A549 (cell line): ENCODE measurements at regions of chr20 and their contacts with region 1.

Region 1: DNA sequence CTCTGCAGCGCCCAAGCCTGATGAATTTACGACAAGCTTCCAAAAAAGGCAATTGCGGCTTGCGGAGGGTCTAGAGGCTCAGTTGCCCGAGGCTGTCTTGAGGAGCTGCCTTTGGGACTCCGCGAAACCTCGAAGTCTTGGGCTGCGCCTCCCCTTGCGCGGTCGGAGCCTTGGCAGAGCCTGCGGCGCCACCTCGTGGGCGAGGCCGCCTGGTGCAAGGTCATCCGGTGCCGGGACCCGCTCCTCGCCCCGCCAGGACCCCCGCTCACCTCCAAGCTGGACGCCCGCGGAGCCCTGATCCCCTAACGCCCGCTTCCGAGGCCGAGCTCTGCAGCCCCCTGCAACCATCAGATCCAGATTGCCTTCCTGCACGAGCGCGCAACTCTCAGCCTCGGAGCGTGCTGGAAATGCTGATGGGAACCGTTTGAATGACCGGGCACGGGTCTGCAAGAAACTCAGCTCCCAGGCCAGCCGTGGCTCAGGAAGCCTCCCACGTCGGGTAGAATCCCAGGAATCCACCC is 14.9 kb upstream of the FAM210B start:
- DNase-seq: peak; percentile 55 to 59
- ATAC-seq: peak; percentile 87 to 98; a peak in 5 of 6 replicates
- H3K4me3 ChIP-seq: peak overlapping the region; percentile 11; the same call in 1 of the 3 replicates
- H3K27ac ChIP-seq: no peak overlapping the region
- H3K4me1 ChIP-seq: 0 out of 3 replicates have a peak, but pooled peaks cover 6% of the 10 kb centered on the region
- CTCF ChIP-seq: peak; percentile 64
- EP300 ChIP-seq: no peak
- POLR2A ChIP-seq: no peak
- RAD21 ChIP-seq: peak; percentile 75 to 82

Region 2: GRCh38 chr20:54680872-54681619 is 1662.9 kb before region 1 on chr20:
- CTCF ChIA-PET with region 1: interaction called, 16 read pairs
- POLR2A ChIA-PET with region 1: no interaction called
- DNase-seq: peak in 1 of 2 experiments; percentile 51
- ATAC-seq: peak in 1 of 2 experiments; percentile 69; a peak in 3 of 6 replicates
- H3K4me3 ChIP-seq: no peak overlapping the region
- H3K27ac ChIP-seq: no peak overlapping the region
- H3K4me1 ChIP-seq: no peaks in the 10 kb centered on the region
- CTCF ChIP-seq: peak; percentile 51
- EP300 ChIP-seq: no peak
- POLR2A ChIP-seq: no peak
- RAD21 ChIP-seq: peak; percentile 70

Region 3: GRCh38 chr20:56247948-56248782 is 95.8 kb before region 1 on chr20 and contains the start of gene MC3R:
- CTCF ChIA-PET with region 1: interaction called, 38 read pairs
- POLR2A ChIA-PET with region 1: no interaction called
- DNase-seq: peak; percentile 26 to 63
- ATAC-seq: peak; percentile 90 to 96
- H3K4me3 ChIP-seq: no peak within 1 kb of the TSS
- H3K27ac ChIP-seq: no peak within 1 kb of the TSS
- H3K4me1 ChIP-seq: no peaks in the 10 kb centered on the region
- CTCF ChIP-seq: peak; percentile 62
- EP300 ChIP-seq: no peak
- POLR2A ChIP-seq: no peak
- RAD21 ChIP-seq: peak; percentile 56 to 62
- polyA plus RNA-seq, gene MC3R: not detected in 2 replicates

Region 4: DNA sequence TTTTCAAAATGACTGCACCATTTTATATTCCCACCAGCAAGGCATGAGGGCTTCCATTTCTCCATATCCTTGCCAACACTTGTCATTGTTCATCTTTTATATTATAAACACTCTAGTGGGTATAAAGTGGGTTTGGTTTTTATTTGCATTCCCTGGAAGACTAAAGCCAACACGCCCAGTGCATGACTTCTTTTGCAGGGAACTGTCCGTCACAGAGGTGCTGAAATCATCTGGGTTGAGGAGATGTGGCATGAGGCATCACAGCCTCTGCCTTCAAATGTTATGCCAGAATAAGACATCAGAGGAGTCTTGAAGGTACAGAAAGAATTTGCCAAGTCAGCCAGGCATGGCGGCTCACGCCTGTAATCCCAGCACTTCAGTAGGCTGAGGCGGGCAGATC is 15.1 kb before region 1 on chr20:
- CTCF ChIA-PET with region 1: interaction called, 16 read pairs
- POLR2A ChIA-PET with region 1: no interaction called
- DNase-seq: peak in 1 of 2 experiments; percentile 6
- ATAC-seq: no peak
- H3K4me3 ChIP-seq: no peak overlapping the region
- H3K27ac ChIP-seq: no peak overlapping the region
- H3K4me1 ChIP-seq: no peaks in the 10 kb centered on the region
- CTCF ChIP-seq: no peak
- EP300 ChIP-seq: no peak
- POLR2A ChIP-seq: no peak
- RAD21 ChIP-seq: no peak

Region 5: DNA sequence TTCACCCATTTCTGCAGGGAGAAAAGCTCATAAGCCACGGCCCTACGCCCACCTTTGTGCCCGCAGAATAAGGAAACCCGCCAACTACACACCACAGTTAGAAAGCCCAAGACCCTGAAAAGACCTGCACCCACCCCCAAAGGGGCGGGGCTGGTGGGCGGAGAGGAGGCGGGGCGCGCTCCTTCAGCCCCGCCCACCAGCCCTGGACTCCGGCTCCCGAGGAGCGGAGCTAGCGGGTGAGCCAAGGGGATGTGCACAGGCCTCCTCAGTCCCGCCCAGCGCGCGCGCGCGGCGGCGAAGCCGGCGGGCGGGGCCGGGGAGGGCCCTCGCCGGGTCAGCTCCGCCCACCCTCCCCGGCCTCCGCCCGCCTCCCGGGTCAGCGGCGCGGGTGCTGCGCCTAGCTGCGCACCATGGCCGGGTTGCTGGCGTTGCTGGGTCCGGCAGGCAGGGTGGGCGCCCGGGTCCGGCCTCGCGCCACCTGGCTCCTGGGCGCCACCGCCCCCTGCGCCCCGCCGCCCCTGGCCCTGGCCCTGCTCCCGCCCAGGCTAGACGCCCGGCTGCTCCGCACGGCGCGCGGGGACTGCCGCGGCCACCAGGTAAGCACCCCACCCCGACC is 14.8 kb after region 1 on chr20 and contains the start of gene FAM210B:
- CTCF ChIA-PET with region 1: interaction called, 20 read pairs
- POLR2A ChIA-PET with region 1: no interaction called
- DNase-seq: peak; percentile 83 to 86
- ATAC-seq: peak; percentile 94 to 98
- H3K4me3 ChIP-seq: peak within 1 kb of the TSS; percentile 80
- H3K27ac ChIP-seq: peak within 1 kb of the TSS; percentile 75 to 93
- H3K4me1 ChIP-seq: no peaks in the 10 kb centered on the region
- CTCF ChIP-seq: no peak
- EP300 ChIP-seq: no peak
- POLR2A ChIP-seq: peak; percentile 65
- RAD21 ChIP-seq: no peak
- polyA plus RNA-seq, gene FAM210B: 12.9 and 13.1 TPM in 2 replicates